T-cell (primary cell): ENCODE measurements at regions of chr1 and their contacts with region 1.

Region 1: GRCh38 chr1:151455231-151455630 is 4.1 kb downstream of the POGZ start:
- DNase-seq: no peak
- ATAC-seq: no peak
- H3K4me3 ChIP-seq: no peak overlapping the region
- H3K4me3 Mint-ChIP-seq: no peak overlapping the region
- H3K27ac ChIP-seq: no peak overlapping the region
- H3K27ac Mint-ChIP-seq: peak overlapping the region; percentile 71 to 72
- H3K4me1 ChIP-seq: peaks cover 5 to 21% of the 10 kb centered on the region in 2 experiments
- H3K4me1 Mint-ChIP-seq: peaks cover 49 to 52% (median 49%) of the 10 kb centered on the region in 3 donors
- H3K27me3 ChIP-seq: no peaks in the 10 kb centered on the region
- H3K27me3 Mint-ChIP-seq: no peaks in the 10 kb centered on the region

Region 2: GRCh38 chr1:151686561-151686960 is 231.3 kb after region 1 on chr1:
- CTCF ChIA-PET with region 1: no interaction called
- POLR2A ChIA-PET with region 1: interaction called in 1 of 2 experiments, 13 read pairs
- DNase-seq: no peak
- ATAC-seq: no peak
- H3K4me3 ChIP-seq: no peak overlapping the region
- H3K4me3 Mint-ChIP-seq: no peak overlapping the region
- H3K27ac ChIP-seq: no peak overlapping the region
- H3K27ac Mint-ChIP-seq: no peak overlapping the region
- H3K4me1 ChIP-seq: no peaks in the 10 kb centered on the region
- H3K4me1 Mint-ChIP-seq: peaks cover 0 to under 1% (median under 1%) of the 10 kb centered on the region in 3 donors
- H3K27me3 ChIP-seq: no peaks in the 10 kb centered on the region
- H3K27me3 Mint-ChIP-seq: no peaks in the 10 kb centered on the region